ENCODE measurements at regions of chr7 and their contacts with region 1.

Region 1: GRCh38 chr7:148884299-148885022 is 370 bp upstream of the EZH2 start:
- DNase-seq: peak; percentile 96
- H3K4me3 ChIP-seq: peak overlapping the region; percentile 97
- H3K27ac ChIP-seq: peak overlapping the region; percentile 98
- H3K4me1 ChIP-seq: peaks cover 15% of the 10 kb centered on the region
- H3K27me3 ChIP-seq: no peaks in the 10 kb centered on the region
- CTCF ChIP-seq: no peak

Region 2: GRCh38 chr7:148698397-148699023 is 186.0 kb before region 1 on chr7 and contains the start of gene CUL1:
- CTCF ChIA-PET with region 1: no interaction called
- POLR2A ChIA-PET with region 1: no interaction called
- intact Hi-C with region 1: loop called (anchors 5 kb)
- DNase-seq: peak; percentile 78
- H3K4me3 ChIP-seq: peak within 1 kb of the TSS; percentile 89
- H3K27ac ChIP-seq: peak within 1 kb of the TSS; percentile 97
- H3K4me1 ChIP-seq: peaks cover 40% of the 10 kb centered on the region
- H3K27me3 ChIP-seq: no peaks in the 10 kb centered on the region
- CTCF ChIP-seq: no peak
- total RNA-seq, gene CUL1: 75.5 and 75.7 TPM in 2 replicates

Region 3: DNA sequence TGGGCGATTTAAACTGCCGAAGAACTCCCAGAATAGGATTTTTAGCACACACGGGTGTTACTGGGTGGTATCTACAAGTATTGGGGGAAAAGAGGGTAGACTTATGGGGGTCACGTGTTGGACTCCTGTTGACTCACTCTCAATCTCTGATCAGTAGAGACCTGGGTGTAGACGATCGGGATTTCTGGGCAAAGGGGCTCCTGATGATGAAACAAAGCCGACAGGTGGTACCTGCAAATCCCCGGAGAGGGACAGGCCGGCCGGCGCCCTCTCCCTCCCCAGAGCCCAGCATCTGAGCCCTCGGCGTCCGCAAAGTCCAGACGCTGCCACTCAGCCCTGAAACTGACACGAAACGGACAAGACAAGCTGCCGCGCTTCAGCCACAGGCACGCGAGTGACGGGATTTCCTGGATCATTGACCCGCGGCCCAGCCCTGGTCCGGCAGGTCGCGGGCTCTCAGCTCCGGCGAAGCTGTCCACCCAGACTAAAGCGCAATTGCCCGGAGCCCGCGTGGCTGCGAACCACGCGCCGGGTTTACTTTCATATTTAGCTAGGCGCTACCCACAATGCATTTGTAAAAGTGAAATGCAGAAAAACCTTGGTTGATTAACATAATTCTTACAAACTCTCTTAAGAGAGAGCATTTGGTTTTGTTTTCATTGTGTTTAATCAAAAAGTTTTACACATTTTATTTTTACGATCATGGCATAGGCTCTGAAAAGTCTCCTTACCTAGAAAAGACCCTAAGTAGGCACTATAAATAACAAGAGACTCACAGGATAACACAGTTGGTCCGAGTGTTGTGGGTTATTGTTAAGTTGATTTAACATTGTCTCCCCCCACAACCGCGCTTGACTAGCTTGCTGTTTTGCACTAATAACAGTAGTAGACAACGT is 56.5 kb after region 1 on chr7:
- CTCF ChIA-PET with region 1: no interaction called
- POLR2A ChIA-PET with region 1: no interaction called
- intact Hi-C with region 1: loop called (anchors 1 kb)
- DNase-seq: peak; percentile 92
- H3K4me3 ChIP-seq: peak overlapping the region; percentile 67
- H3K27ac ChIP-seq: peak overlapping the region; percentile 95
- H3K4me1 ChIP-seq: peaks cover 7% of the 10 kb centered on the region
- H3K27me3 ChIP-seq: no peaks in the 10 kb centered on the region
- CTCF ChIP-seq: no peak

Measured in A673 (cell line).